ENCODE measurements at regions of chr4 and their contacts with region 1.

Region 1: GRCh38 chr4:47122592-47123291 is 91.4 kb downstream of the GABRB1 start:
- DNase-seq: peak; percentile 48
- H3K4me3 Mint-ChIP-seq: no peak overlapping the region
- H3K27ac Mint-ChIP-seq: no peak overlapping the region
- H3K4me1 Mint-ChIP-seq: peaks cover 4% of the 10 kb centered on the region
- H3K27me3 Mint-ChIP-seq: no peaks in the 10 kb centered on the region

Region 2: GRCh38 chr4:46844325-46844917 is 278.3 kb before region 1 on chr4:
- intact Hi-C with region 1: loop called (anchors 1 kb)
- DNase-seq: no peak
- H3K4me3 Mint-ChIP-seq: no peak overlapping the region
- H3K27ac Mint-ChIP-seq: no peak overlapping the region
- H3K4me1 Mint-ChIP-seq: no peaks in the 10 kb centered on the region
- H3K27me3 Mint-ChIP-seq: no peaks in the 10 kb centered on the region

Region 3: DNA sequence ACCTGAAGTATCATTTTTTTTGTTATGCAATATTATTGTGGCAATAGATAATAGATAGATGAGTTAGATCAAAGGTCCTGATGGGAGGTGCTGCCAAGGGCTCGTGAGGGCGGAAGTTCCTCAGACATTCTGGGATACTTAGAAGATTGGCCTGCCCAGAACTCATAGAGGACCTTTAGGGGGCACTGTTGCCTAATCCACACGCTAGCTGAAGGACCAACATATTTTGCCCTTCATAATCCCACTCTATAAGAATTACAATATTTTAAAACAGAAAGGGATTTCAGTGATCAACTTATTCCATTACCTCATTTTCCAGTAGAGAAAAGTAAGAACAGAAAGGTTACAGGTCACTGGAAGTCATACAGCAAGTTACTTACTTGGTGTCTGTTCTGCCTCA is 190.8 kb before region 1 on chr4:
- intact Hi-C with region 1: loop called (anchors 1 kb)
- DNase-seq: no peak
- H3K4me3 Mint-ChIP-seq: no peak overlapping the region
- H3K27ac Mint-ChIP-seq: no peak overlapping the region
- H3K4me1 Mint-ChIP-seq: no peaks in the 10 kb centered on the region
- H3K27me3 Mint-ChIP-seq: peaks cover 10% of the 10 kb centered on the region

Region 4: GRCh38 chr4:47383829-47384427 is 261.2 kb after region 1 on chr4:
- intact Hi-C with region 1: loop called (anchors 2 kb)
- DNase-seq: no peak
- H3K4me3 Mint-ChIP-seq: no peak overlapping the region
- H3K27ac Mint-ChIP-seq: no peak overlapping the region
- H3K4me1 Mint-ChIP-seq: no peaks in the 10 kb centered on the region
- H3K27me3 Mint-ChIP-seq: peaks cover 2% of the 10 kb centered on the region